ENCODE measurements at regions of chr2 and their contacts with region 1.

Region 1: GRCh38 chr2:1550658-1551316 is 137.5 kb downstream of the TPO start:
- DNase-seq: peak; percentile 54
- H3K4me3 Mint-ChIP-seq: no peak overlapping the region
- H3K27ac Mint-ChIP-seq: no peak overlapping the region
- H3K4me1 Mint-ChIP-seq: peaks cover 13% of the 10 kb centered on the region
- H3K27me3 Mint-ChIP-seq: no peaks in the 10 kb centered on the region
- CTCF ChIP-seq: peak; percentile 98

Region 2: DNA sequence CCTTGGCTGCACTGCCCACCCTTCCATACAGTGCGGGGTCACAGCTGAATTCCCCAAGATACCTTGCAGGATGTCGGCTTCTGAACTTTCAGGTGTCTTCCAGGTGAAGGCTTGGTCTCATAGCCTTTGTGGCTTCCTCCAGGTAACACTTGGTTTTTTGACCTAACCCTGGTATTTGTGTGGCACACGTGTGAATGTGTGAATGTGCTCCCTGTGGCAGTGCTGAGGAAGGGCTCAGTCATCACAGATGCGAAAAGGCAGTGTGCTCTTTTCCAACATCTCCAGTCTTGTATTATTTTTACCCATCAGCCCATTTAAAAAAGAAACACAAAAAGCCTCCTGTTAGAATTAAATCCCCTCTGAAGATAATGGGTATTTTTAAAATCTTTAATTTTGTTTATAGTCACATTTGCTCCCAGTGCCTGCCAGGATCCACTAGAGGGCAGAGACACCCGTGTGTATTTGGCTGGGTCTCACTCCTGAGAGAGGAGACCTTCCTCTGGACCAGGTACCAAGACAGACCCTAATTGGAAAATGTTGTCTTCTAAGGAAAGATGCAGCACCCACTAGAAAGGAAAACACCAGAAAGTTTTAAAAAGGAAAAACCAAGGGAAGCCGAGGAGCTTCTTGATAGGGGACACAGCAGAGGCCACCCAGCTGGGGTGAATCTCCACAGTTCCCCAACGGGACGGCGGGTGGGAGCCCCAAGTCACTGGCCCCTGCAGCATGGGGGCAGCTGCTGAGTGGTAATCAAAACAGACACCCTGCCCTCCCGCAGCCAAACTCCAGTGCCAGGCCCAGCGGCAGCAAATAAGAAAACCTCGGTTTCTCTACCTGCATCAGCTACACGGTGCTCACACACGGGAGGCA is 1532.2 kb before region 1 on chr2:
- CTCF ChIA-PET with region 1: no interaction called
- POLR2A ChIA-PET with region 1: no interaction called
- intact Hi-C with region 1: no loop called
- DNase-seq: peak; percentile 46
- H3K4me3 Mint-ChIP-seq: no peak overlapping the region
- H3K27ac Mint-ChIP-seq: no peak overlapping the region
- H3K4me1 Mint-ChIP-seq: peaks cover 9% of the 10 kb centered on the region
- H3K27me3 Mint-ChIP-seq: no peaks in the 10 kb centered on the region
- CTCF ChIP-seq: peak; percentile 74

Region 3: DNA sequence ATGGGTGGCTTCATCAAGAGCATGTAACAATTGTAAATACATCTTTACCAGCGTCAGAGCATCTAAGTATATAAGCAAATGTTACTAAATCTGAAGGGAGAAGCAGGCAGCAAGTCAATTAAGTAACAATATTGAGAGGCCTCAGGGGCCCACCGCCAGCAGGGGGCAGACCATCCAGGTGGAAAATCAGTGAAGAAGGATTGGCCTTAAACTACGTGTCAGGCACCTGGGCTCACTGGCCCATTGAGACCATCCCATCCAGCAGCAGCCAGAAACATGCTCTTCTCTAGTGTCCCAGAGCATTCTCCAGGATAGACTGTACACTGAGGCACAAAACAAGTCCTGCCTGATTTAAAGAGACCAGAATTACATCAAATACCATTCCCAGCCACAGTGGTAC is 696.3 kb before region 1 on chr2:
- CTCF ChIA-PET with region 1: interaction called, 7 read pairs
- POLR2A ChIA-PET with region 1: no interaction called
- intact Hi-C with region 1: loop called (anchors 1 kb)
- DNase-seq: peak; percentile 30
- H3K4me3 Mint-ChIP-seq: no peak overlapping the region
- H3K27ac Mint-ChIP-seq: no peak overlapping the region
- H3K4me1 Mint-ChIP-seq: no peaks in the 10 kb centered on the region
- H3K27me3 Mint-ChIP-seq: no peaks in the 10 kb centered on the region
- CTCF ChIP-seq: peak; percentile 54

Region 4: GRCh38 chr2:1047485-1047884 is 503.3 kb before region 1 on chr2:
- CTCF ChIA-PET with region 1: no interaction called
- POLR2A ChIA-PET with region 1: no interaction called
- intact Hi-C with region 1: loop called (anchors 5 kb)
- DNase-seq: no peak
- H3K4me3 Mint-ChIP-seq: no peak overlapping the region
- H3K27ac Mint-ChIP-seq: no peak overlapping the region
- H3K4me1 Mint-ChIP-seq: peaks cover 13% of the 10 kb centered on the region
- H3K27me3 Mint-ChIP-seq: no peaks in the 10 kb centered on the region
- CTCF ChIP-seq: no peak

Region 5: GRCh38 chr2:1571477-1572417 is 21.0 kb after region 1 on chr2:
- CTCF ChIA-PET with region 1: interaction called, 19 read pairs
- POLR2A ChIA-PET with region 1: no interaction called
- intact Hi-C with region 1: no loop called
- DNase-seq: no peak
- H3K4me3 Mint-ChIP-seq: no peak overlapping the region
- H3K27ac Mint-ChIP-seq: no peak overlapping the region
- H3K4me1 Mint-ChIP-seq: no peaks in the 10 kb centered on the region
- H3K27me3 Mint-ChIP-seq: no peaks in the 10 kb centered on the region
- CTCF ChIP-seq: no peak

Region 6: DNA sequence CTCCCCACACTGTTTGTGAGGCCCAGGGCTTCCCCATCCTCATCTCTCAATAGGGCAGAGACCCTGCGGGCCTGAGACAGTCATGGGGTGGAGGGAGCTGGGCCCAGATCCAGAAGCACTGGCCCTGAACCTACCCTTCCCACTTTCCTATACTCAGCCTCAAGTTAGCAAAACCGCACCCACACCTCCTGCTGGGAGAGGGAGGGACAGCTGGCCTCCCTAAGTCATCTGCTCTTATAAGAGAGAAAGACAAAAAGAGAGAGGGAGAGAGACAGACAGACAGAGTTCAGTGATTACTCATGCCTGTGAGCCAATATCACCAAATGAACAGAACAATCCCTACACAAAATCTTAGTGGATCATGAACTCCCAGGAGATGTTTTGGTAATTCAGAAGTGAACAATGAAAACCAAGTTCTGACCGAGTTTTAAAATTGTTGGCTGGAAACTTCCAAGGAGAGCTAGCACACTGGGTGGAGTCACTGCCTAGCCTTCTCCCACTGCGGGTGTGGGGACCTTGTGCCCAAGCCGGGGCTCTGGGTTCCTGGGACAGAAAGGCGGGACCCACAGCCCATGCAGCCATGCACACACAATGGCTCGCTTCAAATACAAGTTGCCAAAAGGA is 63.1 kb after region 1 on chr2:
- CTCF ChIA-PET with region 1: interaction called, 5 read pairs
- POLR2A ChIA-PET with region 1: no interaction called
- intact Hi-C with region 1: loop called (anchors 10 kb)
- DNase-seq: peak; percentile 86
- H3K4me3 Mint-ChIP-seq: peak overlapping the region; percentile 22
- H3K27ac Mint-ChIP-seq: peak overlapping the region; percentile 63
- H3K4me1 Mint-ChIP-seq: peaks cover 25% of the 10 kb centered on the region
- H3K27me3 Mint-ChIP-seq: no peaks in the 10 kb centered on the region
- CTCF ChIP-seq: no peak

Region 7: GRCh38 chr2:1750933-1751766 is 200.4 kb after region 1 on chr2:
- CTCF ChIA-PET with region 1: interaction called, 10 read pairs
- POLR2A ChIA-PET with region 1: no interaction called
- intact Hi-C with region 1: loop called (anchors 2 kb)
- DNase-seq: peak; percentile 74
- H3K4me3 Mint-ChIP-seq: no peak overlapping the region
- H3K27ac Mint-ChIP-seq: no peak overlapping the region
- H3K4me1 Mint-ChIP-seq: peaks cover 13% of the 10 kb centered on the region
- H3K27me3 Mint-ChIP-seq: no peaks in the 10 kb centered on the region
- CTCF ChIP-seq: peak; percentile 88

Region 8: DNA sequence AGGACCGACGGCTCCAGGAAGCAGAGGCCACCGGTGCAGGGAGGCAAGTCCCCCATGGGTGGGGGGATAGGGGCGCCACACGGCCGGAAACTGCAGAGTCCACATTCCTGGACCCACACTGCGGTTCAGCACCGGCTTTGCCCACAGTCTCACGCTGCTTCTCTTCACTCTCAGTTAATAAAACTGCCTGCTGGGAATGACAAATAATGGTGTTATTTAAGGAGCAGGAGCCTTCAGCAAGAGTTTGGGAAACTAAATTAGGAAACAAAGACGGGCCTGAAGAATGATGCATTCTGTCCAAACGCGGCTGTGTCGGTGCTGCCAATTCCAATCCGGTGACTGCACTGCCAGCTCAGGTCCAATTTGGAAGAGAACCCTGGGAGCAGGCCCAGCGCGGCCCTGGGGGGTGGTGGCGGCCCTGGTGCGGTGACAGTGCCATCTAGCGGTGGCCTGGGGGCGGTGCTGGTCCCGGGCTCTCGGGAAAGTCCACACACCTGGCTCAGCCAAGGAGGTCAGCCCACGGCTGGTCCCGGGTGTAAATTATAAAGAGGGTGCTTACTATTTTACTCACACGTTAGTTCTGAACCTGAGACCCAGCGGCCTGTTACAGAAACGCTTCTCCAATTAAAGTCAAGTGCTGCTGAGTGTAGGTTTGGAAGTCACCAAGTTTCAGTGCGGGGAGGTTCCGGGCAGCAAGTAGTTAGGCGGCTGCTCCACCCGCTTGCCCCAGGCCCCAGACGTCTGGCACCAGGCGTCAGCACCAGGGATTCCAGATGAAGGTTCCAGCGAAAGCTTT is 266.7 kb after region 1 on chr2:
- CTCF ChIA-PET with region 1: interaction called, 5 read pairs
- POLR2A ChIA-PET with region 1: no interaction called
- intact Hi-C with region 1: loop called (anchors 2 kb)
- DNase-seq: peak; percentile 75
- H3K4me3 Mint-ChIP-seq: peak overlapping the region; percentile 8
- H3K27ac Mint-ChIP-seq: peak overlapping the region; percentile 73
- H3K4me1 Mint-ChIP-seq: peaks cover 6% of the 10 kb centered on the region
- H3K27me3 Mint-ChIP-seq: no peaks in the 10 kb centered on the region
- CTCF ChIP-seq: peak; percentile 97

Measured in MCF 10A (cell line).